Astrocyte of the cerebellum (primary cell): ENCODE measurements at regions of chr4 and their contacts with region 1.

Region 1: DNA sequence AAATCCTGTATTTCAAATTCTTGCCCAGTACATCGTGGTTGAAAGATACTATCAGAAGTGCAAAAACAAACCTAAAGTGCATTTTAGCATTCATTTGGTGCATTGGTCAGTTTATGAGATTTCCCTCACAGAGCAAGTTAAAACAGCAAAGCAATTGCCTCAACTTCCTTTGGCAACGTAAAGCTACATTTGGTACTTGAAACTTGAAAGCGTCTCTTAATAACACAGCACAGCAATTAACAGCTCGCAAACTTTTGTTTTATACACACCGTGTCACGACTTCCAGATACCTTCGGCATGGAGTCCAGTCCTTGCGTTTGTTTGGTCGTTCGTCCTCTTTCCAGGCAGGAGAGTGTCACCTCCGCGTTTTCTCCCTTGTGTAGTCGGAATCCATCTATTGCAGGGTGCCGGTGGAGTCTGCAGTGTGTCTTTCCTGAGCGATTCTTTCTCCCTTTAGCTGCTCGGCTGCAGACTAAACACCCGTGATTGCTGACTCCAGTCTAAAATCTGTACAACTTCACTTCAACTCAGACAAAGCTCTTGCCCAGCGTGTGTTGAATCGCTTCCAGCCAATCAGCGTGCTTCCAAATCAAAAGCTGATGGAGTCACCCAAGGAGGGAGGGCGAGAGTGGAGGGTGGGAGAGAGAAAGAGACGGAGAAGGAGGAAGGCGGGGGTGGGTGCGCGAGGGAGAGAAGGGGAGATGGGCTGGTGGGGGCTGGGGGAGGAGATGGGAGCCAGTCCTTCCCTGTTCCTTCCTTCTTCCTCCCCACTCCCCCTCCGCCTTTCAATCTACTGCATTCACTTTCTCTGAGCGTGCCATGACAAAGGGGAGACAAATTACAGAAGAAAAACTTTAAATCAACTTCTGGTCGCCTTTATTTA is at the start of gene PCDH18:
- DNase-seq: peak; percentile 97
- H3K4me3 ChIP-seq: peak within 1 kb of the TSS; percentile 80
- CTCF ChIP-seq: no peak

Region 2: DNA sequence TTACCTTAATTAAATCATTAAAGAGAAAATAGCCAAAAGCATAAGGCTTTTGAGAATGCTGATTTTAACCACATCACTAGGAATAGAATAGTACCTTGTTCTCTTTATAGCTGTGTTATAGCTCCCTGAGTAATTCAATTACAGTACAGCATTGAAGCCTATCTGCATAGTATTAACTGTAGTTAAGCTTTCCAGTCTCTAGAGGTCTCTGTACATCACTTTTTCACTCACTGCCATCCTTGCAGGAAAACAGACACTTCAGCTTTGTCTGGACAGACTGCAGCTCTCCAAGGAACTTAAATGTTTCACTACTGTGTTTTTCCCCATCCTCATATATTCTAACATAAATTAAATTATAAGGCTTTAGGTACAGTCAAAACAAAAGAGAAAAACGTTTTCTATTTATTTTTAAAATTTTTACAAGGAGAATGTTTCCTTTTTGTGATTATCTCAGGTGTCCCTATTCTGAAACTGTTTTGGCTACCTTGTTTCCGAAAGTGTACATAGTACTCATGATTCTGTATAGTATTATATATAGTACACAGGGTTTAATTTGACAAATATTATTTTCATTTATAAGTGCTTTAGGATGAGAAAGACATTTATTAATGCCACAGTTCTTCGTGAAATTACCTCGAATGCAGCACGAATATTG is 407.8 kb before region 1 on chr4:
- in situ Hi-C with region 1: loop called (anchors 10 kb)
- DNase-seq: peak; percentile 57
- H3K4me3 ChIP-seq: peak overlapping the region; percentile 35
- CTCF ChIP-seq: peak; percentile 65

Region 3: GRCh38 chr4:137293281-137293680 is 238.9 kb before region 1 on chr4:
- in situ Hi-C with region 1: no loop called
- DNase-seq: no peak
- H3K4me3 ChIP-seq: no peak overlapping the region
- CTCF ChIP-seq: no peak

Region 4: DNA sequence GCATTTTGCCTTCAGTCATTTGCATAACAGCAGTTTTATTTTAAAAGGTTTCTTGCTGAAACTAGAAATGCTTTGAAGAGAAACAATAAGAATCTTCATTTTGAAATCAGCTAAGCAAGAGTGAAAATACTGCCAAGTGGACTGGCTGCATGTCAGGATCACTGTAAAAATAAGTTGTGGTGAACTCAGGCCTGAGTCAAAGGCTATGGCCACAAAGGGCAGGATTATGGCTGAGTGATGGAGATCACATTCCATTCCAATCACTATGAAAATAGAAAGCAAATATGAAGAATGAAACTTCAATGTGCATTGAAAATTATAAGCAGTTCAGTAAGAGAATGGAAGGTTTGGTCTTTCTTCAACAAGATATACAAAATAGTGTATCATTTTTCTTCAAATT is 224.4 kb before region 1 on chr4:
- in situ Hi-C with region 1: loop called (anchors 10 kb)
- DNase-seq: peak; percentile 64
- H3K4me3 ChIP-seq: no peak overlapping the region
- CTCF ChIP-seq: no peak

Region 5: GRCh38 chr4:137474711-137475301 is 57.4 kb before region 1 on chr4:
- in situ Hi-C with region 1: loop called (anchors 5 kb)
- DNase-seq: peak; percentile 32
- H3K4me3 ChIP-seq: no peak overlapping the region
- CTCF ChIP-seq: no peak

Region 6: DNA sequence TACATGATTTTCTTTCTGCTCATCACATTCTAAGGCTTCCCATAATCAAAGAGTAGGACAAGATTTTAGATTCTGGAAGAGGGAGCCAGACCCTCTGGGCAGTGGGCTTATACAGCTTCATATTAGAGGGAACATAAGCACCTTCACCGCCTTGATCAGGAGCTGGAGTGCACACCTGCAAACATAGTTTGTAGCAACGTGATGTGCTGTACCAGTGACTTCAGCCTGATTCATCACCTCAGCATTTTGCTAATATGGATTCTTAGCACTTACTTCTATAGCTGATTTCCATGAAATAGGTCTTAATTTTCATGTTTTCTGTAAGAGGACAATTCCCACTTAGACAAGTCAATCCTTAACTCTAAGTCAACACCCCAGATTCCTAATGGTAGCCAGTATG is 36.6 kb before region 1 on chr4:
- in situ Hi-C with region 1: no loop called
- DNase-seq: no peak
- H3K4me3 ChIP-seq: no peak overlapping the region
- CTCF ChIP-seq: no peak

Region 7: GRCh38 chr4:137635108-137635507 is 102.9 kb after region 1 on chr4:
- in situ Hi-C with region 1: no loop called
- DNase-seq: no peak
- H3K4me3 ChIP-seq: no peak overlapping the region
- CTCF ChIP-seq: no peak

Region 8: GRCh38 chr4:138680989-138681604 is 1148.9 kb after region 1 on chr4:
- in situ Hi-C with region 1: loop called (anchors 25 kb)
- DNase-seq: peak; percentile 74
- H3K4me3 ChIP-seq: no peak overlapping the region
- CTCF ChIP-seq: peak; percentile 75